HepG2 (cell line): ENCODE measurements at regions of chr2 and their contacts with region 1.

Region 1: DNA sequence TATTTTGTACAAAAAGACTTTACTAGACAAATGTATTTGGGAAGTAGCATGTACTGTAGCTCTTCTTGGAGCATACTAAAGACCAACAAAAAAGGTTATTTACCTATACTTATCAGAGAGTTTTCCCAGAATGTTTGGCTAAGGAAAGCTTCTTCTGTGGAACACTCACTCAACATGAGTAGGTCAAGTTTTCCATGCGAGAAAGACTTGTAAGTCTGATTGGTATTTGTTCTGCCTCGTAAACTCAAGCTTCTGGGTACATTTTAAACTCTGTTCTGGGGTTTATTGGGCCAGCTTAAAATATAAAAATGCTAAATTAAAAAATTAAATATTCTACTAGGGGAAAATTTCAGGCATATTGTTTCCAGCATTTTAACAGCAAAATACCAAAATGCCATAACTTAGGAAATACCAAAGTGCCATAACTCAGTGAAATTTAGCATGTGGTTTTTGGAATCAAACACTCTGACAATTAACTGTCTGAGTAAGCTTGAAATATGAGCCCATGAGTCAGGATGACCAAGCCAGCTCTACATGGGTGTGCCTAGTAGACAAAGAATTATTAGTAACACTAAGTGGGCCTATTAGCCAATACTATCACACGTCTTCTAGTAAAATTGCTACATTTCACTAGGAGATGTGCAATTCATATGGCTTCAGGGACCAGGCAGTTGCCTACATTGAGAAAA is 47.3 kb upstream of the SERPINE2 start:
- DNase-seq: peak; percentile 43
- ATAC-seq: no peak
- H3K4me3 ChIP-seq: no peak overlapping the region
- H3K27ac ChIP-seq: no peak overlapping the region
- H3K4me1 ChIP-seq: peaks cover 9% of the 10 kb centered on the region; the same call in 1 of the 2 replicates
- H3K27me3 ChIP-seq: peaks cover 0 to 13% of the 10 kb centered on the region in 2 experiments; a peak in 1 of 5 replicates
- CTCF ChIP-seq: no peak
- EP300 ChIP-seq: no peak
- POLR2A ChIP-seq: no peak
- RAD21 ChIP-seq: no peak

Region 2: GRCh38 chr2:222753251-222753824 is 1333.0 kb before region 1 on chr2:
- CTCF ChIA-PET with region 1: no interaction called
- POLR2A ChIA-PET with region 1: no interaction called
- in situ Hi-C with region 1: no loop called
- intact Hi-C with region 1: no loop called
- DNase-seq: no peak
- ATAC-seq: peak; percentile 77
- H3K4me3 ChIP-seq: peak overlapping the region in 2 of 3 experiments; percentile 8 to 20; a peak in 2 of 6 replicates
- H3K27ac ChIP-seq: peak overlapping the region; percentile 16
- H3K4me1 ChIP-seq: peaks cover 61% of the 10 kb centered on the region
- H3K27me3 ChIP-seq: no peaks in the 10 kb centered on the region
- CTCF ChIP-seq: no peak
- EP300 ChIP-seq: no peak; a peak in 1 of 4 replicates
- POLR2A ChIP-seq: no peak
- RAD21 ChIP-seq: no peak

Region 3: GRCh38 chr2:224062481-224063297 is 23.7 kb before region 1 on chr2:
- CTCF ChIA-PET with region 1: no interaction called
- POLR2A ChIA-PET with region 1: no interaction called
- in situ Hi-C with region 1: no loop called
- intact Hi-C with region 1: loop called (anchors 1 kb)
- DNase-seq: no peak
- ATAC-seq: peak; percentile 67
- H3K4me3 ChIP-seq: no peak overlapping the region
- H3K27ac ChIP-seq: no peak overlapping the region
- H3K4me1 ChIP-seq: 0 out of 2 replicates have a peak, but pooled peaks cover 5% of the 10 kb centered on the region
- H3K27me3 ChIP-seq: peaks cover 0 to 18% of the 10 kb centered on the region in 2 experiments; a peak in 2 of 5 replicates
- CTCF ChIP-seq: peak; percentile 41
- EP300 ChIP-seq: no peak
- POLR2A ChIP-seq: no peak
- RAD21 ChIP-seq: no peak